ENCODE measurements at regions of chr1 and their contacts with region 1.

Region 1: DNA sequence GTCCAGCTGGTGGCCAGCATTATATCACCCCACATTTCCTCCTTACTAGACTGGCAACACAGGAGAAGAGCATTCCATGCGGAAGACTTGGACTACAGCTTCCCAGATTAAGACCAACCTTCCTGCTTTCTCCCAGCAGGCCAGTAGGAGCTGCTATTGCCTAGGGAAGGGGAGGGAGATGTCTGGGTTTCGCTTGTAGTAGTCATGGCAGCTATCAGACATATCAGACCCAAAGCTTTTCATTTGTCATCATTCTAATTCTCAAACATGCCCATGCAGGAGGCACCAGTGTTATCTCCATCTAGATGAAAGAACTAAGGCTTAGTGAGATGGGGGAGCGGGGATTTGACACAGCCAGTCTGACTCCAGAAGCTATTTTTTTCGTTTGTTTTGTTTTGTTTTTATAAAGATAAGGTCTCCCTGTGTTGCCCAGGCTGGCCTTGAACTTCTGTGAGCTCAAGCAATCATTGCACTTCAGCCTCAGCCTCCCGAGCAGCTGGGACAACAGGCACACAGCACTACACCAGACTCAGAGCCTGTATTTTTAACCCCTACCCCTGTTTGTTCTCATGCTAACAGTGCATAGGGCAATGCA is 4.5 kb downstream of the PLA2G2A start:
- DNase-seq: peak; percentile 49
- H3K4me3 ChIP-seq: peak overlapping the region; percentile 26
- H3K27ac ChIP-seq: peak overlapping the region; percentile 47
- H3K4me1 ChIP-seq: peaks cover 29% of the 10 kb centered on the region
- H3K27me3 ChIP-seq: peaks cover 35% of the 10 kb centered on the region
- CTCF ChIP-seq: peak; percentile 86

Region 2: GRCh38 chr1:20093940-20094391 is 119.0 kb after region 1 on chr1:
- intact Hi-C with region 1: loop called (anchors 10 kb)
- DNase-seq: peak; percentile 79
- H3K4me3 ChIP-seq: no peak overlapping the region
- H3K27ac ChIP-seq: peak overlapping the region; percentile 81
- H3K4me1 ChIP-seq: peaks cover 6% of the 10 kb centered on the region
- H3K27me3 ChIP-seq: no peaks in the 10 kb centered on the region
- CTCF ChIP-seq: no peak

Measured in left ventricle myocardium inferior (tissue), 1 donor.